Activated T-helper 1 cell treated with anti-CD3 and anti-CD28 coated beads, Interleukin-12 subunit alpha, Interleukin-12 subunit beta, Interleukin-2, Interleukin-4 antibody, amounts not matched to agents 30 ng/mL and 10 ng/mL and 1 ng/mL, durations not matched to agents 14 hours and 24 hours and 36 hours (primary cell): ENCODE measurements at regions of chr1 and their contacts with region 1.

Region 1: DNA sequence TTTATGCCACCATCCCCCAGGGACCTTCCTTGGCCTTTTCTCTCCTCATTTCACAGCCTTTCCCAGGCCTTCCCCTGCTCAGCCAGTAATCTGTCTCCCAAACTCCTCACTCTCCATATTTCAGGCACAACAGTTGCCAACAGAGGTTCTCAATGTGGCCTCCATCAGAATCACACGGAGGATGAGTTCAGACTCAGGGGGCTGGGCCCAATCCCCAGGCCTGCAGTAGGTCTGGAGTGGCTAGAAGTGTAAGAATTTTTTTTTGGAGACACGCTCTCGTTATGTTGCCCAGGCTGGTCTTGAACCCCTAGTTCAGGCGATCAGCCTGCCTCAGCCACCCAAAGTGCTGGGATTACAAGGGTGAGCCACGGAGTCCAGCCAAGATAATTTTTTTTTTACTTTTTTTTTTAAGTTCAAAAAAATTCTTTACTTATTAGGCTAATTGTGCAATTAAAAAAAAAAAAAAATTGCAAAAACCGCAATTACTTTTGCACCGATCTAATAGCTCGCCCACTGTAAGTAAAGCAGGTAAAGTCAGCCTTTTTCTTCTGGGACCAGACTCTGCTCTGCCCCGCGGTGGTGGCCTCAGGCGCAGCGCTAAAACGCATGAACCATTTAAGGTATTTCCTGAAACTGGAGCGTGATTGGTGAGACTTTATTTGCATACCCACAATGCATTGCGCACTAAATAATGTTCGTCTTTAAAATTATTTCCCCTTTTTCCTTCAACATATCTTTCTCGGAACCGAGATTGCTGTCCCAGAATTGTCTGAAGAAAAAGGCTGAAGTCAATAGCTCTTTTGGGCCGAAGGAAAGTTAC is 18.7 kb downstream of the KIAA2013 start:
- DNase-seq: peak; percentile 91
- H3K4me3 Mint-ChIP-seq: peak overlapping the region; percentile 81
- H3K27ac Mint-ChIP-seq: peak overlapping the region; percentile 94
- H3K4me1 Mint-ChIP-seq: peaks cover 38% of the 10 kb centered on the region
- H3K27me3 Mint-ChIP-seq: peaks cover 19% of the 10 kb centered on the region

Region 2: DNA sequence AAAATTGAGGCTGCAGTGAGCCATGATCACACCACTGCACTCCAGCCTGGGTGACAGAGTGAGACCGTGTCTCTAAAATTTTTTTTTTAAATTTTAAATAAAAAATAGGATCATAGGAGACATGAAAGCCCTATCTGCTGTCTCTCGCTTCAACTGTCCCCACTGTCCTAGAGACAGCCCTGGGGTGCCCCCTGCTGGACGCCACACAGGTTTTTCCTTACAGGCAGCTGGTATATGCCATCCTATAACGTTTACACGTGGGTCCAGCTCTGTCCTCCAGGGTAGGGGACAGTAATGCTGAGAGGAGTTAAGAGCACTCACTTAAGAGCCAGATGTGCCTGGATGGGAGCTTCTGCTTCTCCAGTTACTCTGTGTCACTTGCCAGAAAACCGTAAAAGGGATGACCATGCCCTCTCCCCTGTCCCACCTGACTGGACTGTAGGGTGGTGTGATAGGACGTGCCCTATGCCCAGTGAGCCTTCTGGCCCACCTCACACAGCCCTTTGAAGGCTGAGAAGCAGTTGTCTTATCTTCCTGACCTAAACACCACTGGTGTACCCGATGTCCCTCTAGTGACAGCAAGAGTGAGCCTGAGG is 261.7 kb before region 1 on chr1:
- intact Hi-C with region 1: loop called (anchors 5 kb)
- DNase-seq: peak; percentile 63
- H3K4me3 Mint-ChIP-seq: no peak overlapping the region
- H3K27ac Mint-ChIP-seq: no peak overlapping the region
- H3K4me1 Mint-ChIP-seq: peaks cover 9% of the 10 kb centered on the region
- H3K27me3 Mint-ChIP-seq: peaks cover 7% of the 10 kb centered on the region

Region 3: GRCh38 chr1:11805447-11806306 is 101.8 kb before region 1 on chr1 and contains the starts of genes CLCN6 and MTHFR:
- intact Hi-C with region 1: loop called (anchors 1 kb)
- DNase-seq: peak; percentile 99
- H3K4me3 Mint-ChIP-seq: peak within 1 kb of the TSS; percentile 99
- H3K27ac Mint-ChIP-seq: peak within 1 kb of the TSS; percentile 98
- H3K4me1 Mint-ChIP-seq: peaks cover 66% of the 10 kb centered on the region
- H3K27me3 Mint-ChIP-seq: peaks cover 2% of the 10 kb centered on the region
- total RNA-seq, gene CLCN6: 11.2 and 14.3 TPM in 2 replicates
- total RNA-seq, gene MTHFR: 18.1 and 21.4 TPM in 2 replicates

Region 4: GRCh38 chr1:11925938-11926292 is 18.4 kb after region 1 on chr1:
- intact Hi-C with region 1: loop called (anchors 1 kb)
- DNase-seq: no peak
- H3K4me3 Mint-ChIP-seq: no peak overlapping the region
- H3K27ac Mint-ChIP-seq: no peak overlapping the region
- H3K4me1 Mint-ChIP-seq: peaks cover 26% of the 10 kb centered on the region
- H3K27me3 Mint-ChIP-seq: no peaks in the 10 kb centered on the region

Region 5: DNA sequence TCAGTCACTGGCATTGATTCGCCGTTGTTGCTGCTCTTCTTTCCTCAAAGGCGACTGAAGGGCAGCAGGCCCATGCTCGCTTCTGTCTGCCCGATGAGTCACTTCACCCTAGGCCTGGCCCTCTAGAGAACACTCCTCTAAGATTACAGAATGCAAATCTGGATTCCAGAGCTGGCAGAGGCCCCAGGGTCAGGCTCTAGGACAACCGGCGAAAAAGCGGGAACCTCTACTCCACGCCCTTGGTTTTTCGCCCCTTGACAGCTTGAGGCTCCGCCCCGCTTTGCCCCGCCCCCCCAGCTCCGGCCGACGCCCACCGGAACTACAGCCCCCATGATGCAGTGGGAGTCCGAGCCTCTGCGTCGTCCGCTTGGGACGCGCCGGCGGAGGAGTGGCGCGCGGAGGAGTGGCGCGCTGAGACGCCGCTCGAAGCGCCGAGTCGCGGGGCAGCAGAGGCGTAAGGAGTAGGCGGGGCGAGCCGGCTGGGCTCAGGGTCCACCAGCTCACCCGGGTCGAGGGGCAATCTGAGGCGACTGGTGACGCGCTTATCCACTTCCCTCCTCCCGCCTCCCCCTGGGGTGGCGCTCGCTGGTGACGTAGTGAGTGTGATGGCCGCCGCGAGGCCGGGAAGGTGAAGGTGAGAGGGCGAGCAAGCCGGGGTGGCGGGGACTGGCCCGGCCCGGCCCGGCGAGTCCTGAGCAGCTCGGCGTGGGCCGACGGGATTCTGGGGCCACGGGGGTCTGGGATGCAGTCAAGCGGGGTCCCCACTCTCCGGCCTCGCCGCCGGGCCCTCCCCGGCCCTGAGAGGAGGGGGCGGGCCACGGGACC is 72.6 kb after region 1 on chr1 and contains the start of gene MFN2:
- intact Hi-C with region 1: loop called (anchors 1 kb)
- DNase-seq: peak; percentile 89
- H3K4me3 Mint-ChIP-seq: peak within 1 kb of the TSS; percentile 98
- H3K27ac Mint-ChIP-seq: peak within 1 kb of the TSS; percentile 98
- H3K4me1 Mint-ChIP-seq: peaks cover 36% of the 10 kb centered on the region
- H3K27me3 Mint-ChIP-seq: no peaks in the 10 kb centered on the region
- total RNA-seq, gene MFN2: 88.1 and 95.4 TPM in 2 replicates

Region 6: DNA sequence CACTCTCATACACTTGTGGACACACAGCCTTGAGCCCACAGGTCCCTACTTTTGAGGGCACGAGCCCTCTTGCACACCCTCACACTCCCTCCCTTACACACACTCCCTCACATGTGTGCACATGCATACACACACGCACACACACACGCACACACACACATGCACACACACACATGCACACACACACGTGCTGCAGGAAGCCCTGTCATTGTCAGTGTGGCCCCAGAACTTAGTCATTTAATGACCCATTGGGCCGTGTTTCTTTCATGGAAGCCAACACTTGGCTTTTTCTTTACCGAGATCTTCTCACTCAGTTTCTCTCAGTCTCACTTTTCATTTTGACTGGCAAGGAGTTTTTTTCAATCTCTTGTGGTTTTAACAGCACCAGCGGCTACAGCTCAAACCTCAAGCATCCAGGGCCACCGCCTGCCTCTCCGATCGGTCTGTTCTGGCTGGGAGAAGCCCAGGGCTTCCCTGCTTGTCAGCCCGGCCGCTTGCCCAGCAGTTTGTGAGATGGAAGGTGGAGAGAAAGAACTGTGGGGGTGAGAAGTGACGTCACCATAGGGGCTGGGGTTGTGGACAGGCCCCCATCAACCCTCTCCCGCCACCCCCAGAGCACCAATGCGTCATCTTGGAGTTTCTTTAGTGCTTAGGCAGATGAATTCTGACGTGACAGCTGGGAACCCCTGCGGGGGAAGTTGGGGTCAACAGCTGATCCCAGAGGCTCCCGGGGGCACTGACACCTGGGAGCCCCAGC is 139.8 kb after region 1 on chr1:
- intact Hi-C with region 1: loop called (anchors 1 kb)
- DNase-seq: peak; percentile 71
- H3K4me3 Mint-ChIP-seq: no peak overlapping the region
- H3K27ac Mint-ChIP-seq: no peak overlapping the region
- H3K4me1 Mint-ChIP-seq: peaks cover 18% of the 10 kb centered on the region
- H3K27me3 Mint-ChIP-seq: no peaks in the 10 kb centered on the region

Region 7: GRCh38 chr1:12161662-12162458 is 254.4 kb after region 1 on chr1:
- intact Hi-C with region 1: loop called (anchors 1 kb)
- DNase-seq: peak; percentile 79
- H3K4me3 Mint-ChIP-seq: peak overlapping the region; percentile 69
- H3K27ac Mint-ChIP-seq: peak overlapping the region; percentile 95
- H3K4me1 Mint-ChIP-seq: peaks cover 82% of the 10 kb centered on the region
- H3K27me3 Mint-ChIP-seq: no peaks in the 10 kb centered on the region

Region 8: DNA sequence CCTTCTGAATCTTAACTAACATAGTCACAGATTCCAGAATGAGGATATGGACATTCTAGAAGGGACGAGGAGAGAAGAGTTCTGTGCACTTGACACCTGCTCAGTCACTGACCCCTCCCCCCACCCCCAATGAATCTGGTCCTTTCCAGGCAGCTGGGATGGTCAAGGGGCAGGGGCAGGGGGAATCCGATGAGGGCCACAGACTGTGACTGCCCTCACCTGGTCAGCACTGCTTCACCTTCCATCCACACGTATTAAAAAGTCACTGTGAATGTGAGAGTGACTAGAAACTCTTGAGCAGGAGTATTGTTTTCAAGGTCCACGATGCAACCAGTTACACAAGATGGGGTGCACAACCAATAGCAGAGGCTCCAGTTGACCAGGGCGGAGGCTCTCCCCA is 856.5 kb after region 1 on chr1:
- intact Hi-C with region 1: no loop called
- DNase-seq: no peak
- H3K4me3 Mint-ChIP-seq: no peak overlapping the region
- H3K27ac Mint-ChIP-seq: no peak overlapping the region
- H3K4me1 Mint-ChIP-seq: no peaks in the 10 kb centered on the region
- H3K27me3 Mint-ChIP-seq: peaks cover 9% of the 10 kb centered on the region